ENCODE measurements at regions of chr1 and their contacts with region 1.

Region 1: GRCh38 chr1:48572646-48573261 is 100.8 kb upstream of the SPATA6 start:
- DNase-seq: peak; percentile 38
- ATAC-seq: peak; percentile 99
- H3K4me3 ChIP-seq: no peak overlapping the region
- H3K27ac ChIP-seq: no peak overlapping the region
- H3K4me1 ChIP-seq: no peaks in the 10 kb centered on the region
- H3K27me3 ChIP-seq: 0 out of 5 replicates have a peak, but pooled peaks cover 0 to 1% of the 10 kb centered on the region in 2 experiments
- CTCF ChIP-seq: peak; percentile 87
- EP300 ChIP-seq: no peak
- POLR2A ChIP-seq: no peak
- RAD21 ChIP-seq: peak; percentile 65; the same call in 1 of the 2 replicates

Region 2: GRCh38 chr1:48697066-48697707 is 124.4 kb after region 1 on chr1:
- CTCF ChIA-PET with region 1: interaction called, 6 read pairs
- POLR2A ChIA-PET with region 1: no interaction called
- in situ Hi-C with region 1: loop called (anchors 10 kb)
- intact Hi-C with region 1: loop called (anchors 1 kb)
- DNase-seq: peak; percentile 21
- ATAC-seq: peak; percentile 78
- H3K4me3 ChIP-seq: no peak overlapping the region
- H3K27ac ChIP-seq: no peak overlapping the region
- H3K4me1 ChIP-seq: no peaks in the 10 kb centered on the region
- H3K27me3 ChIP-seq: no peaks in the 10 kb centered on the region; a peak in 2 of 5 replicates
- CTCF ChIP-seq: peak; percentile 76
- EP300 ChIP-seq: no peak
- POLR2A ChIP-seq: no peak
- RAD21 ChIP-seq: no peak

Region 3: GRCh38 chr1:50332941-50333594 is 1760.3 kb after region 1 on chr1:
- CTCF ChIA-PET with region 1: no interaction called
- POLR2A ChIA-PET with region 1: no interaction called
- in situ Hi-C with region 1: loop called (anchors 25 kb)
- intact Hi-C with region 1: no loop called
- DNase-seq: peak; percentile 21
- ATAC-seq: peak; percentile 97
- H3K4me3 ChIP-seq: peak overlapping the region; percentile 48 to 82 (median 58)
- H3K27ac ChIP-seq: no peak overlapping the region
- H3K4me1 ChIP-seq: no peaks in the 10 kb centered on the region
- H3K27me3 ChIP-seq: peaks cover 0 to 22% of the 10 kb centered on the region in 2 experiments; a peak in 3 of 5 replicates
- CTCF ChIP-seq: peak; percentile 85
- EP300 ChIP-seq: no peak
- POLR2A ChIP-seq: no peak
- RAD21 ChIP-seq: peak; percentile 88